ENCODE measurements at regions of chr7 and their contacts with region 1.

Region 1: GRCh38 chr7:35624299-35625186 is 70.4 kb downstream of the HERPUD2 start:
- DNase-seq: peak; percentile 31 to 59 (median 45)
- H3K4me3 ChIP-seq: peak overlapping the region in 1 of 4 donors; percentile 6
- H3K27ac ChIP-seq: peak overlapping the region in 1 of 5 donors; percentile 44
- H3K4me1 ChIP-seq: peaks cover 0 to 9% of the 10 kb centered on the region in 2 donors
- H3K27me3 ChIP-seq: no peaks in the 10 kb centered on the region
- CTCF ChIP-seq: peak; percentile 69 to 89 (median 86)
- POLR2A ChIP-seq: no peak

Region 2: DNA sequence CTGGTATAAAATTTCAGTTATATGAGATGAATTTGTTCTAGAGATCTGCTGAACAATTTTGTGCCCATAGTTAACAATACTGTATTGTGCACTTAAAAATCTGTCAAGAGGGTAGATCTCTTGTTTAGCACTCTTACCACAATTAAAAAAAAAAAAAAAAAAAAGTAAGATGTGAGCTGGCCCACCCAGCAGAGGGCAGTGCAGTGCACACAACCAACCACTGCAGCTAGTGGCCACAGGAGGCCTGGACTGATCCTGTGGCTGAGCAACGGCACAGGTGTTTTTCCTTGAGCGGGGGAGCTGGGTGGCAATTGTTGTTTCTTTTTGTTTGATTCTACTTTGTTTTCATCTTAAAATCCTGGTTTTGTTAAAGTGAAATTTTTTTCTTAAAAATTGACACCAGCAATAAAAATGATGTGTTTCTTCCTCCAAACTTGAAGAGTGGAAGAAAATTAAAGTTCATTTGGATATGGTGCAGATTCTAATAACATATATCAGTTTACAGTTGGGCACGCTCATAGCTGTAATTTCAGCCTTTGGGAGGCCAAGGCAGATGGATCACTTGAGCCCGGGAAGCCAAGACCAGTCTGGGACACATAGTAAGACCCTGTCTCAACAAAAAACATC is 199.6 kb before region 1 on chr7:
- intact Hi-C with region 1: loop called (anchors 5 to 10 kb)
- DNase-seq: peak; percentile 47 to 72 (median 64)
- H3K4me3 ChIP-seq: no peak overlapping the region
- H3K27ac ChIP-seq: no peak overlapping the region
- H3K4me1 ChIP-seq: no peaks in the 10 kb centered on the region
- H3K27me3 ChIP-seq: no peaks in the 10 kb centered on the region
- CTCF ChIP-seq: peak; percentile 63 to 93 (median 80)
- POLR2A ChIP-seq: no peak

Region 3: GRCh38 chr7:35537067-35538023 is 87.2 kb before region 1 on chr7:
- intact Hi-C with region 1: loop called (anchors 5 to 10 kb)
- DNase-seq: peak; percentile 62 to 90 (median 78)
- H3K4me3 ChIP-seq: peak overlapping the region in 2 of 4 donors; percentile 11 to 56
- H3K27ac ChIP-seq: no peak overlapping the region
- H3K4me1 ChIP-seq: no peaks in the 10 kb centered on the region
- H3K27me3 ChIP-seq: no peaks in the 10 kb centered on the region
- CTCF ChIP-seq: peak; percentile 88 to 94 (median 90)
- POLR2A ChIP-seq: no peak

Measured in adrenal gland (tissue), 19 donors.